Naive thymus-derived CD8-positive, alpha-beta T cell (primary cell): ENCODE measurements at regions of chr1 and their contacts with region 1.

Region 1: DNA sequence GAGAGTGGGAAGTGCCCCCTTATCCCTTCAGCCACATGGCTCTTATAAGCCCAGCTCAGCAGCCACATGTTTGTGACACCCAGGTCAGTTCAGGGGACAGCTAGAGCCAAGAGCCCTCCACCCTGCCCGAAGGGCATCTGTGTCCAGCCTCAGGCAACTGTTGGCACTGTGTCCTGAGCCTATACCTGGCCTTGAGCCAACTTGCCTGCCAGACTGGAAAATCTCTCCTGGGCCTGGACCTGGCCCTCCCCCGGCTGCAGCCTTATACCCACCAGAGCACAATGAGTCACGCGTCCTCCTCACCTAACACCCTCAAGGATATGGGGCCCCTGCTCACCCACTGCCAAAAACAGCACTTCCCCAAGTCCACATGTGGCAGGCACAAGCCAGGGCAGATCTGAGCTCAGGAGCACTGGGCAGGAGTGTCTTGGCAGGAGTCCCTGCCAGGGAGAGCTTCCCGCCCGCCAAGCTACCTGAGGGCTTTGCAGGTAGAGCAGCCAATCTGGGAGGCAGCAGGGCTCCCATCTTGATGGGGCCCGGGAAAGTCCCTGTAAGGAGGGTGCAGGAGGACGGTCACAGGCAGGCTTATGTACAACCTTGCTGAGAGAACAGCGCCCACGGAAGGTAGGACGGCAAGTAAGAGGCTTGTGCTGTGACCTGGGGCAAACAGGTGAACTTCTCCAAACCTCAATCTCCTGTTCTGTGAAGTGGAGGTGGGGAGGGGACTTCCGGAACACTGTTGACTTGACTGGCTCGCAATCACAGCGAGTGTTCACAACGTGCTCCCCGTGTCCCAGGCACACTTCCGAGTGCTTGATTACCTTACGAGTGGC is 19.8 kb upstream of the HSPG2 start:
- DNase-seq: peak; percentile 29 to 85 (median 60)
- ATAC-seq: peak; percentile 94 to 96
- H3K4me3 Mint-ChIP-seq: peak overlapping the region; percentile 60 to 92 (median 78)
- H3K27ac Mint-ChIP-seq: peak overlapping the region; percentile 86 to 99 (median 94)
- H3K4me1 Mint-ChIP-seq: peaks cover 14 to 54% (median 40%) of the 10 kb centered on the region in 4 donors
- H3K27me3 Mint-ChIP-seq: peaks cover 0 to 3% (median 0%) of the 10 kb centered on the region in 5 donors

Region 2: DNA sequence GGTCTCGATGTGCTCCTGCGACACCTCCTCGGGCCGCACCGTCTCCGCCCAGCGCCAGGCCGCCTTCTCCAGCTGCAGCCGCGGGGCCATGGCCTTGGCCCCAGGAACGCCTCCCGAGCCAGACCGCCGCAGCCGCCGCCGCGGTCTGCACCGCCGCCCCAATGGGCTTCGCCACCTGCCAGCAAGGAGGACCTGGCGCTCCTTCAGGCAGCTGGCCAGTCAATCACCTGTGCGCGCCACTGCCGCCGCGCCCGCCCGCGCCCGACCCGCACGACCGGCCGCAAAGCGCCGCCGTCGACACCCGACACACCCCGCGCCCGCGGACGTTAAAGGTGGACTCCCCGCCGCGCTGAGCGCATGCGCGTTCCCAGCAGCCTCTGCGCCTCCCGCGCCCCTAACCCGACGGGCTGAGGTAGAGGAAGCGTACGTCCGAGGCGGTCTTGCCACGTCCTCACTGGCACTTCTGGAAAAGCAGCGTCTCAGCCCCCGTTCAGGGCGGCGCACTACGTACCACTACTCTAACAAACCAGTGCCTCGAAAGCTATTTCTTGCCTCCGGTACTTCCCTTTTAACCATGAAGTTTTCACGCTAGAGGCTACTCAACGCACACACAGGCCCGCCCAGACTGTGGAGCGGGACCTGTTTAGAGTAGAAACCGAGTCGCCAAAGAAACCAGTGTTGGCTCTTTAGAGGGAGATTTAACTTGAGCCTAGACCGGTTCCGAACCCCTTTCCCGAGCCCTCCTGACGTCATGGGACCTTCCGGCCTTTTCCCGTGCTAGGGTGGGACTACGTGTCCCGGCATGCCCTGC is 173.9 kb before region 1 on chr1 and contains the start of gene USP48:
- POLR2A ChIA-PET with region 1: interaction called, 10 read pairs
- DNase-seq: peak; percentile 92 to 98 (median 96)
- ATAC-seq: peak; percentile 86 to 88
- H3K4me3 Mint-ChIP-seq: peak within 1 kb of the TSS; percentile 94 to 99 (median 98)
- H3K27ac Mint-ChIP-seq: peak within 1 kb of the TSS; percentile 99 to 100 (median 100)
- H3K4me1 Mint-ChIP-seq: peaks cover 19 to 37% (median 30%) of the 10 kb centered on the region in 4 donors
- H3K27me3 Mint-ChIP-seq: peaks cover 0 to 2% (median 0%) of the 10 kb centered on the region in 5 donors
- polyA plus RNA-seq, gene USP48: 25.8 to 30.0 (median 28.4) TPM

Region 3: DNA sequence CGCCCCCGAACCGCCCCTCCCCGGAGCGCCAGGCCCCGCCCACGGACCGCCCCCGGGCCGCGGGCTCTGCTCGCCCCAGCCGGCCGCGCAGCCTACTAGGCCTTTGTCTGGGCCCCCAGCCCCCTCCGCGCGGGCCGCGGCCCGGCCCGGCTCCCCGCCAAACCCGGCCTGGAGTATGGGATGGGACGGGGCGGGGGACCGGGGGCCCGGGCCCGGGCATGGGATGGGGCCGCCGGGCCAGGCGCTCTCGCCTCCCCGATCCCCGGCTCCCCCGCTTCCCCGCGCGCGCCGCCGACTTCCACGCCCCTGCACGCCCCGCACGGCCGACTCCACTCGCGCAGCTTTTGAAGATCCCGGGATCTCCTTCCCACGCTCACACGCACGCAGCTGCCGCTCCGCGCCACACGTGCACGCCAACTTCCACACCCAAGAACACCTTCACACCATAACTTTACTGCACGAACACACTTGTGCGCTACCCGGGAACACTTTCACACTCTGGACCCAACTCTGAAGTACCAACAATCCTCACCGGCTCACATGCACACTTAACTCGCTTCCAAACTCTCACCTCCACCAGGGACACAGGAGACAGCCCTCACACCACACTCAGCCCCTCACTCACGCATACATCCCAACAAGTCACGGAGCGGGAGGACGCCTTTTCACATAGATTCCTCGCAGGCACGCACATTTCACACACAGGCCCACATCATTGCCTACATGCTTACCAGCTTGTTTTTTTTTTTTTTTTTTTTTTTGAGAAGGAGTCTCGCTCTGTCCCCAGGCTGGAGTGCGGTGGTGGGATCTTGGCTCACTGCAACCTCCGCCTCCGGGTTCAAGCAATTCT is 19.3 kb before region 1 on chr1:
- POLR2A ChIA-PET with region 1: interaction called, 27 read pairs
- DNase-seq: peak; percentile 41 to 80 (median 65)
- ATAC-seq: peak; percentile 83 to 85
- H3K4me3 Mint-ChIP-seq: peak overlapping the region; percentile 82 to 100 (median 92)
- H3K27ac Mint-ChIP-seq: peak overlapping the region; percentile 37 to 91 (median 84)
- H3K4me1 Mint-ChIP-seq: peaks cover 11 to 41% (median 24%) of the 10 kb centered on the region in 4 donors
- H3K27me3 Mint-ChIP-seq: peaks cover 0 to 11% (median 5%) of the 10 kb centered on the region in 5 donors